ENCODE measurements at regions of chr2 and their contacts with region 1.

Region 1: DNA sequence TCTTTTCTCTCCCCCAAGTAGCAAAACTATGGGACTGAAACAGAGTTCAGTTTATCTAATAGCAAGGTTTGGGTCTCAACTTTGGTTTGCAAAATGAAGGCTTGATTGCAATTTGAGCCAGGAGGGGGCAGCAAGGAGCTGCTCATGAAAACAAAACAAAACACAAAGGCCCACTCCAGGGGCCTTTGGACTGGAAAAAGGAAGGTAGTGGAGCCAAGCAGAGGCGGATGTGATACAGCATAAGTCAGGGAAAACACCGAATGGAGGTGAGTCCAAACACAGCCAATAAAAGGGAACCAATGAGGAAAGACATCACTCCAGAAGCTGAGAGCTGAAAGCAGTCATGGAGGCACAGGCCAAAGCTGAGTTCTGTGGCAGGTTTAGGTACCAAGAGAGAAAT is 799.7 kb upstream of the ACVR2A start:
- DNase-seq: peak; percentile 15
- ATAC-seq: peak; percentile 79
- H3K4me3 ChIP-seq: no peak overlapping the region
- H3K27ac ChIP-seq: no peak overlapping the region
- H3K4me1 ChIP-seq: no peaks in the 10 kb centered on the region
- H3K27me3 ChIP-seq: no peaks in the 10 kb centered on the region
- CTCF ChIP-seq: peak; percentile 54 to 69 (median 59)
- EP300 ChIP-seq: no peak
- POLR2A ChIP-seq: no peak
- RAD21 ChIP-seq: peak; percentile 88

Region 2: DNA sequence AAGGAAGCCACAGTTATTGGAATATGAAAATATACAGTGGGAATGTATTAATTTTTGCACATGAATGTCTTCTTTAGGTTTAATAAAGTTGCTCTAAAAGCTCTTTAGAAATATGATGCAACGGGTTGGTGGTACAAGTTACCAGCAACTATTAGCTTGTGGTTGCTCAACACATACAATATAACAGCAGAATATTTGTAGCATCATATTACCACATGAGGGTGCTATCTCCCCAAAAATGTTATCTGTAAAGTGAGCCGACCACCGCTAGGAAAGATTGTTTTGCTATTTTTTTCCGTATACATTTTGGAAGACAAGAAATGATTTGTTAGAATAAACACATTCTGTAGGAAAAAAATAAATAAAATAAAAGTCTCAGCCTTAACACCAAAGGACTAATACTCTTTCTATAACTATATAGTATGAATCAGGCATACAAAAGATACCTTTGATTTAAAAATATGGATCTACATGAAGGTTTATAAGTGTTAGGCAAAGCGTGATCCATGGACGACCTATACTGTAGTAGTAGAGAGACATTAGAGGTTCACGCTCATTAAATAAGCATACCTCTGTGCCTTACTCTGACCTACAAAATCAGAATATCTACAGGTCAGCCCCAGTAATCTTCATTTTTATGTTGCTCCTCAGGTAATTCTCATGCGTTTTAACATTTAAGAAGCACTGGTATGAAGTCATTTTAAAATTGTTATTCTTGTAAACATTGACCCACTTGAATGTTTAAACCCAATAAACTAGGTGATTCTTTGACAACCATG is 310.9 kb before region 1 on chr2:
- CTCF ChIA-PET with region 1: interaction called, 30 read pairs
- POLR2A ChIA-PET with region 1: no interaction called
- RAD21 ChIA-PET with region 1: interaction called, 16 read pairs
- SMC1A ChIA-PET with region 1: interaction called, 16 read pairs
- in situ Hi-C with region 1: no loop called
- intact Hi-C with region 1: loop called (anchors 2 kb)
- DNase-seq: peak; percentile 5
- ATAC-seq: peak; percentile 95
- H3K4me3 ChIP-seq: no peak overlapping the region
- H3K27ac ChIP-seq: no peak overlapping the region
- H3K4me1 ChIP-seq: no peaks in the 10 kb centered on the region
- H3K27me3 ChIP-seq: no peaks in the 10 kb centered on the region
- CTCF ChIP-seq: peak; percentile 40 to 57 (median 40); a peak in 5 of 6 replicates
- EP300 ChIP-seq: no peak
- POLR2A ChIP-seq: no peak
- RAD21 ChIP-seq: peak; percentile 50

Region 3: GRCh38 chr2:146927080-146927711 is 117.9 kb before region 1 on chr2:
- CTCF ChIA-PET with region 1: interaction called, 13 read pairs
- POLR2A ChIA-PET with region 1: no interaction called
- RAD21 ChIA-PET with region 1: interaction called, 11 read pairs
- SMC1A ChIA-PET with region 1: interaction called, 13 read pairs
- in situ Hi-C with region 1: no loop called
- intact Hi-C with region 1: loop called (anchors 5 kb)
- DNase-seq: no peak
- ATAC-seq: peak; percentile 86
- H3K4me3 ChIP-seq: no peak overlapping the region
- H3K27ac ChIP-seq: no peak overlapping the region
- H3K4me1 ChIP-seq: no peaks in the 10 kb centered on the region
- H3K27me3 ChIP-seq: no peaks in the 10 kb centered on the region
- CTCF ChIP-seq: peak; percentile 33 to 71 (median 57); a peak in 5 of 6 replicates
- EP300 ChIP-seq: no peak
- POLR2A ChIP-seq: no peak
- RAD21 ChIP-seq: peak; percentile 67

Region 4: DNA sequence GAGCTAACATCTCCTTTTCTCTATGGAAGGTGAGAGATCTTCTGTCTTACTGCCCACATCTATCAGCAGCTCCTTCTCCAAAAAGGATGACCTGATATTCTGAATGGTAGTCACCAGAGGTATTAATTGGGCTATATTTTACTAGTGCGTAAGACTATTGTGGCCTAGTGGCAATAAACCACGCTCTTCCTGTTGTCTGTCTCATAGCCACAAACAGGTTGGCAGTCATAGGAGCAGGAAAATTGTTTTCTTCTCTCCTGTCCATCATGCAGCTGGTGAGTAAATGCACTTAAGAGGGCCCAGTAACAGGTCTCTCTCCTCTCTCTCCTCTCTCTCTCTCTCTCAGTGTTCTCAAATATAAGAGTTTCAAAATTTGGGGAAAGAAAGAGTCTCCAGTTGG is 57.1 kb before region 1 on chr2:
- CTCF ChIA-PET with region 1: interaction called, 10 read pairs
- POLR2A ChIA-PET with region 1: no interaction called
- RAD21 ChIA-PET with region 1: no interaction called
- SMC1A ChIA-PET with region 1: no interaction called
- in situ Hi-C with region 1: no loop called
- intact Hi-C with region 1: no loop called
- DNase-seq: no peak
- ATAC-seq: no peak
- H3K4me3 ChIP-seq: no peak overlapping the region
- H3K27ac ChIP-seq: no peak overlapping the region
- H3K4me1 ChIP-seq: 0 out of 2 replicates have a peak, but pooled peaks cover 3% of the 10 kb centered on the region
- H3K27me3 ChIP-seq: no peaks in the 10 kb centered on the region
- CTCF ChIP-seq: no peak
- EP300 ChIP-seq: no peak
- POLR2A ChIP-seq: no peak
- RAD21 ChIP-seq: no peak

Region 5: DNA sequence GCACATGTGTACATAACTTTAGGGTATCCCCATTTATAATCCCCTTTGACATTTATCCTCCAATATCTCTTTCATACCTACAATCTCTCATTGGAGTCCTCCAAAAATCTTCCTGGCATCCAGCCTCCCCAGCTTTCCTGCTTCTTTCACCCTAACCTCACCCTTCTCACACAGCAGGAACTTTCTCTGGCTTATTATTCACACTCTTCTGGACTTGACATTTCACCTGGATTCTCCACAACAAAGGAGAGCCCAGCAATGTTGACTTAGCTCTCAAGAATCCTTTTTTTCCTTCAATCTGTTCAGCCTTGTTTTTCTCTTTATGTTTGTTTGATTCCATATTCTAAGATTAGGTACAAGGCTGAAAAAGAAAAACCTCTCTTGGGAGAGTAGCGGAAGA is 16.2 kb after region 1 on chr2:
- CTCF ChIA-PET with region 1: interaction called, 15 read pairs
- POLR2A ChIA-PET with region 1: no interaction called
- RAD21 ChIA-PET with region 1: no interaction called
- SMC1A ChIA-PET with region 1: interaction called, 6 read pairs
- in situ Hi-C with region 1: no loop called
- intact Hi-C with region 1: no loop called
- DNase-seq: no peak
- ATAC-seq: no peak
- H3K4me3 ChIP-seq: no peak overlapping the region
- H3K27ac ChIP-seq: no peak overlapping the region
- H3K4me1 ChIP-seq: no peaks in the 10 kb centered on the region
- H3K27me3 ChIP-seq: no peaks in the 10 kb centered on the region
- CTCF ChIP-seq: no peak
- EP300 ChIP-seq: no peak
- POLR2A ChIP-seq: no peak
- RAD21 ChIP-seq: no peak

Region 6: DNA sequence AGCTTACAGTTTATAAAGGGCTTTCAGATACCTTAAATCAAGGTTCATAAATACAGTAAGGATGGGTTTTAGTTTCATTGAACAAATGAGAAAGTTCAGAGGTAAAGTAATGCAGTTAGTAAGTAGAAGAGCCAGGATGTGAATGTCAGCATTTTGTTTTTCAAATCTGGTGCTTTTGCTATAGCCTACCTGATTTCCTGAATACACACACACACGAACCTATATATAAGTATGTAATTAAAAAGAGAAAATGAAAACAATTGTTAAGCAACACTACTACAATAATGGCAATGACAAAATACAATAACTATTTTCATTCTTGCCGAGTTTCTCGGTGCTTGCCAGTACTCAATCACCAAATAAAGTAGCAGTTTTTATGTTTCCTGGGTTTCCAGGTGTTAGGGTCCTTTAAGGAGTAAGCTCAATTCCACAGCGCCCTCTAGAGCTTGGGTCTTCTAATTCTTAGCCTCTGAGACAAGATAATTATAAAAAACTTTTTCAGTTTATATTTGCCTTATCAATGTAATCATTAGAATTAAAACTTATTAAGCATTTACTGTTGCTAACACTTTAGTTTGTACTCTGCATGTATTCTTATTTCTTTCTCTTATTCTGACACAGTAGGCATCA is 286.8 kb after region 1 on chr2:
- CTCF ChIA-PET with region 1: interaction called, 38 read pairs
- POLR2A ChIA-PET with region 1: no interaction called
- RAD21 ChIA-PET with region 1: interaction called, 29 read pairs
- SMC1A ChIA-PET with region 1: interaction called, 25 read pairs
- in situ Hi-C with region 1: no loop called
- intact Hi-C with region 1: loop called (anchors 2 kb)
- DNase-seq: no peak
- ATAC-seq: peak; percentile 82
- H3K4me3 ChIP-seq: no peak overlapping the region
- H3K27ac ChIP-seq: no peak overlapping the region
- H3K4me1 ChIP-seq: peaks cover 4% of the 10 kb centered on the region; the same call in 1 of the 2 replicates
- H3K27me3 ChIP-seq: no peaks in the 10 kb centered on the region
- CTCF ChIP-seq: peak; percentile 40 to 61 (median 58); a peak in 5 of 6 replicates
- EP300 ChIP-seq: no peak
- POLR2A ChIP-seq: no peak
- RAD21 ChIP-seq: peak; percentile 91

Region 7: GRCh38 chr2:147910990-147911473 is 865.9 kb after region 1 on chr2:
- CTCF ChIA-PET with region 1: interaction called, 110 read pairs
- POLR2A ChIA-PET with region 1: interaction called, 3 read pairs
- RAD21 ChIA-PET with region 1: interaction called, 83 read pairs
- SMC1A ChIA-PET with region 1: interaction called, 49 read pairs
- in situ Hi-C with region 1: loop called (anchors 5 kb)
- intact Hi-C with region 1: loop called (anchors 1 kb)
- DNase-seq: peak; percentile 21
- ATAC-seq: peak; percentile 65
- H3K4me3 ChIP-seq: no peak overlapping the region
- H3K27ac ChIP-seq: no peak overlapping the region
- H3K4me1 ChIP-seq: no peaks in the 10 kb centered on the region; the same call in 1 of the 2 replicates
- H3K27me3 ChIP-seq: no peaks in the 10 kb centered on the region
- CTCF ChIP-seq: peak; percentile 48 to 73 (median 50); a peak in 5 of 6 replicates
- EP300 ChIP-seq: no peak
- POLR2A ChIP-seq: no peak
- RAD21 ChIP-seq: peak; percentile 92